Mammary epithelial cell (primary cell): ENCODE measurements at regions of chr2 and their contacts with region 1.

Region 1: GRCh38 chr2:237858294-237859081 is 935 bp upstream of the RAMP1 start:
- DNase-seq: peak; percentile 60
- H3K4me3 ChIP-seq: no peak overlapping the region
- H3K27ac ChIP-seq: no peak overlapping the region
- H3K4me1 ChIP-seq: peaks cover 7% of the 10 kb centered on the region
- H3K27me3 ChIP-seq: no peaks in the 10 kb centered on the region
- CTCF ChIP-seq: peak; percentile 89 to 97

Region 2: DNA sequence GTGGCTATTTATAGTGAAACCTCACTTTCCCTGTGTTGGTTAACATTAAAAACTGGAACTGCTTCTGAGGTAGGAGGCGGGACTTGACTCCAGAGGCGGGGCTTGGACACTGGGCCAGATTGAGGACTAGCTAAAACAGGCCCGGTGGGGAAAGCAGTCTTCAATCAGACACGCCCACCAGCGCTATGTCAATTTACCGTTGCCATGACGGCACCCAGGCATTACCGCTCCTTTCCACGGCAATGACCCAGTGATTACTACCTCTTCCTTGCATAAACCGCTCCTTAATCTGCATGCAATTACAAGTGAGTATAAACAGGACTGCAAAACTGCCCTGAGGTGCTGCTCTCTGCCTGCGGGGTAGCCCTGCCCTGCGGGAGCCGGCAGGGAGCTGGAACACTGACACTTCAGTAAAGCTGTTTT is 195.8 kb before region 1 on chr2:
- CTCF ChIA-PET with region 1: no interaction called
- dilution Hi-C with region 1: no loop called
- in situ Hi-C with region 1: no loop called
- intact Hi-C with region 1: no loop called
- DNase-seq: peak; percentile 94
- H3K4me3 ChIP-seq: no peak overlapping the region
- H3K27ac ChIP-seq: no peak overlapping the region
- H3K4me1 ChIP-seq: peaks cover 11% of the 10 kb centered on the region
- H3K27me3 ChIP-seq: peaks cover 2% of the 10 kb centered on the region
- CTCF ChIP-seq: no peak

Region 3: GRCh38 chr2:237886685-237887481 is 28.4 kb after region 1 on chr2:
- CTCF ChIA-PET with region 1: no interaction called
- dilution Hi-C with region 1: no loop called
- in situ Hi-C with region 1: no loop called
- intact Hi-C with region 1: no loop called
- DNase-seq: no peak
- H3K4me3 ChIP-seq: no peak overlapping the region
- H3K27ac ChIP-seq: no peak overlapping the region
- H3K4me1 ChIP-seq: no peaks in the 10 kb centered on the region
- H3K27me3 ChIP-seq: no peaks in the 10 kb centered on the region
- CTCF ChIP-seq: no peak

Region 4: DNA sequence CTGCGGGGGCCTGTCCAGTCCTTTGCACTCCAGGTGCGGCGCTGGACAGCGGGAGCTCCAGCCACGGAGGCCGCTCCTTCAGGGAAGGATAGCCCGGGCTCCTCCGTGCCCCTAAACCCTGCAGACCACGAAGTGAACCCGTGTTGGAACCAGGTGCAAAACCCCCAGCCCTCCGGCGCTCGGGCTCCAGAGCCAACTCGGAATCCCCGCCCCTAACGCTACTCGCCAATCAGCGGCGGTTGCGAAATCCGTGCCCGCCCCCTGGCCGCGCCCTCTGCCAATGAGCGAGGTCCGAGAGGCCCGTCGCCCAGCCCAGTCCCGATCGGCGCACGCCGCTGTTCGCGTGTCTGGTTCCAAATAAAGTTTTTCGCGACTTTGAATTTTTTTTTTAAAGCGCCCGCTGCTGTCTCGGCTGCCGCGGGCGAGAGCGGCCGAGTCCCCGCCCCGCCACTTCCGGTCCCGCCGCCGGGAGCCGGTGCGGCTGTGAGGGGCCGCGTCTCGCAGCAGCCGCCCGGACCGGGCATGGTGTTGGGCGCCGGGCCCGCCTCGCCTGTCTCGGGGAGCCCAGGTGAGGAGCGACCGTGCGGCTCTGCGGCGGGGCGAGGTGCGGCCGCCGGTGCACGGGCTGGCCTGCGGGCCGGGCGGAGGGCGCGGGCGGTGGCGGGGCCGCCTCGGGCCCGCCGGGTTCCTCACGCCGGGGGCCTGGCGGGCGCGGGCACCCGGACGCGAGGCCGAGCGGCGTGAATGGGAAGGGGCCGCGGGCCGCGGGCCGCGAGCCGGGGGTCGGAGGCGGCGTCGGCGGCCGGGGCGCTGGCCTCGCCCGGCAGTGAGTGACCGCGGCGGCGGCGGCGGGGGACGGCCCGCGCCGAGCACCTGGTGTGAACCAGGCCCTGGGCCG is 108.3 kb after region 1 on chr2 and contains the start of gene UBE2F:
- CTCF ChIA-PET with region 1: no interaction called
- dilution Hi-C with region 1: no loop called
- in situ Hi-C with region 1: no loop called
- intact Hi-C with region 1: loop called (anchors 1 kb)
- DNase-seq: peak; percentile 94
- H3K4me3 ChIP-seq: peak within 1 kb of the TSS; percentile 40 to 95 (median 88)
- H3K27ac ChIP-seq: no peak within 1 kb of the TSS
- H3K4me1 ChIP-seq: peaks cover 14% of the 10 kb centered on the region
- H3K27me3 ChIP-seq: no peaks in the 10 kb centered on the region
- CTCF ChIP-seq: no peak
- total RNA-seq, gene UBE2F: 41.5 to 69.3 TPM

Region 5: GRCh38 chr2:238060542-238061314 is 202.2 kb after region 1 on chr2 and contains the start of gene SCLY:
- CTCF ChIA-PET with region 1: no interaction called
- dilution Hi-C with region 1: no loop called
- in situ Hi-C with region 1: loop called in 1 of 2 experiments (anchors 10 kb)
- intact Hi-C with region 1: loop called (anchors 1 kb)
- DNase-seq: peak; percentile 99
- H3K4me3 ChIP-seq: peak within 1 kb of the TSS; percentile 90 to 97 (median 92)
- H3K27ac ChIP-seq: peak within 1 kb of the TSS; percentile 72
- H3K4me1 ChIP-seq: peaks cover 12% of the 10 kb centered on the region
- H3K27me3 ChIP-seq: no peaks in the 10 kb centered on the region
- CTCF ChIP-seq: no peak
- total RNA-seq, gene SCLY: 10.5 to 23.8 TPM

Region 6: DNA sequence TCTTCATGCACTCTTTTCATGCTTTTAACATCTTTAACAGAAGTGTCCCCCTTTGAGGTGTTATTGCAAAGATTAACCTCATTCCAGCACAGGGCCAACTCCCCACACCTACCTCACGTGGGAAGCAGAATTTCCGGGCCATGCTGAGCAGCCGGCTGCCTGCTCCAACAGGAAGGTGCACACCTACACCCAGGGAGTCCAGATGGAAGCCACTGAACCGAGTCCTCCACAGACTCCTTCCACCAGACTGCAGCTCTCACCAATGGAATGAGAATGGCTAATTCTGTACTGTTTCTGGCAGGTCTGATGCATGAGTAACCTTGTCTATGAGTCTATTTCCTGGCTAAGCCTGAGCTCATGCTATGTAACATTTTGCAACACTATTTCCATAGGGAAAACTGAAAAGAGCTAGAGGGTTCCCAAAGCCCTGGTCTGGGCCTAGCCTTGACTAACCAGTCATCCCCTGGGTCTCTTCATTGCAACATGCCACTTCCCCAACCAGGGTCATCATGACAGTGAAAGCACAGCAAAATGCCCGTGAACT is 311.3 kb after region 1 on chr2:
- CTCF ChIA-PET with region 1: no interaction called
- dilution Hi-C with region 1: no loop called
- in situ Hi-C with region 1: no loop called
- intact Hi-C with region 1: loop called (anchors 1 kb)
- DNase-seq: peak; percentile 92
- H3K4me3 ChIP-seq: no peak overlapping the region
- H3K27ac ChIP-seq: peak overlapping the region; percentile 79
- H3K4me1 ChIP-seq: peaks cover 28% of the 10 kb centered on the region
- H3K27me3 ChIP-seq: no peaks in the 10 kb centered on the region
- CTCF ChIP-seq: no peak